ENCODE measurements at regions of chr19 and their contacts with region 1.

Region 1: GRCh38 chr19:36837906-36838783 is at the start of gene ZNF790:
- DNase-seq: peak; percentile 83 to 86 (median 84)
- H3K4me3 ChIP-seq: peak within 1 kb of the TSS; percentile 61 to 92 (median 64)
- H3K4me3 Mint-ChIP-seq: no peak within 1 kb of the TSS
- H3K27ac ChIP-seq: peak within 1 kb of the TSS; percentile 83 to 86
- H3K27ac Mint-ChIP-seq: no peak within 1 kb of the TSS
- H3K4me1 ChIP-seq: peaks cover 14 to 18% of the 10 kb centered on the region in 2 donors
- H3K4me1 Mint-ChIP-seq: no peaks in the 10 kb centered on the region
- H3K27me3 ChIP-seq: no peaks in the 10 kb centered on the region
- H3K27me3 Mint-ChIP-seq: no peaks in the 10 kb centered on the region
- CTCF ChIP-seq: no peak
- polyA plus RNA-seq, gene ZNF790: 0.35 to 2.7 (median 2.3) TPM

Region 2: DNA sequence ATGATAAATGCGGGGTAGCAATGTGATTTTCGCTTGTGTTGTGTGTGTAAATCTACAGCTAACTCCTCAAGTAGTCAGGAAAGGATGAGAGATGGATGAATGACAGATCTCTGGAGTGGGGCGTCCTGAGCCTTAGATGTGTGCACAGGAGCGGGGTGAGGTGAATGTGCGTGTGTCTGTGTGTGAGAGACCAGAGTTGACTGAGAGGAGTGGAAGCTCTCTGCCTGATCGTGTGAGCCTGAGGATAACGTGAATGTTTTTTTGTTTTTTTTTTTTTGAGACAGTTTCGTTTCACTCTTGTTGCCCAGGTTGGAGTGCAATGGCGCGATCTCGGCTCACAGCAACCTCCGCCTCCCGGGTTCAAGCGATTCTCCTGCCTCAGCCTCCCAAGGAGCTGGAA is 172.3 kb before region 1 on chr19:
- intact Hi-C with region 1: loop called in 1 of 2 experiments (anchors 5 kb)
- DNase-seq: no peak
- H3K4me3 ChIP-seq: peak overlapping the region; percentile 58 to 85 (median 79)
- H3K4me3 Mint-ChIP-seq: peak overlapping the region; percentile 97 to 100
- H3K27ac ChIP-seq: no peak overlapping the region
- H3K27ac Mint-ChIP-seq: peak overlapping the region in 1 of 7 donors; percentile 16
- H3K4me1 ChIP-seq: peaks cover 8 to 14% of the 10 kb centered on the region in 2 donors
- H3K4me1 Mint-ChIP-seq: peaks cover 13% of the 10 kb centered on the region
- H3K27me3 ChIP-seq: no peaks in the 10 kb centered on the region
- H3K27me3 Mint-ChIP-seq: peaks cover 2 to 5% (median 3%) of the 10 kb centered on the region in 3 donors
- CTCF ChIP-seq: no peak

Region 3: DNA sequence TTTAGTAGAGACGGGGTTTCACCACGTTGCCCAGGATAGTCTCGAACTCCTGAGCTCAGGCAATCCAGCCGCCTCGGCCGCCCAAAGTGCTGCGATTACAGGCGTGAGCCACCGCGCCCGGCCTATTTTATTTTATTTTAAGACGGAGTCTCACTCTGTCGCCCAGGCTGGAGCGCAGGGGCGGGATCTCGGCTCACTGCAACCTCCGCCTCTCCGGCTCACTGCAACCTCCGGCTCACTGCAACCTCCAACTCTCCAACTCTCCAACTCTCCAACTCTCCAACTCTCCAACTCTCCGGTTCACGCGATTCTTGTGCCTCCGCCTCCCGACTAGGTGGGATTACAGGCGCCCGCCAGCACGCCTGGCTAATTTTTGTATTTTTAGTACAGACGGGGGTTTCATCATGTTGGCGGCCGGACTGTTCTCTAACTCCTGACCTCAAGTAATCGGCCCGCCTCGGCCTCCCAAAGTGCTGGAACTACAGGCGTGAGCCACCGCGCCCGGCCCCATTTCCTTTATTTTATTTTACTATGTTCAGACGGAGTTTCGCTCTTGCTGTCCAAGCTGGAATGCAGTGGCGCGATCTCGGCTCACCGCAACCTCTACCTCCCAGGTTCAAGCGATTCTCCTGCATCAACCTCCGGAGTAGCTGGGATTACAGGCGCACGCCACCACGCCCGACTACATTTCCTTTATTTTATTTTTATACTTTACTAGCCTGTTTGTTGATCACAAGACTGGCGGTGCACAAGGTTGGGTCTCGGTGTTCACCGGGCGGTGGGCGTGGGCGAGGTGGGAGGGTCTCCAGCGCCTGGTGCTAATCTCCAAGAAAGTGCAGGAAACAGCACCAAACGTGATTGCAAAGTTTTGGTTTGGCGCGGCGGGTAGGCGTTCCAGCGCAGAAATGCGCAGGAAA is 41.8 kb before region 1 on chr19:
- intact Hi-C with region 1: loop called (anchors 5 kb)
- DNase-seq: no peak
- H3K4me3 ChIP-seq: peak overlapping the region; percentile 60 to 97 (median 61)
- H3K4me3 Mint-ChIP-seq: peak overlapping the region; percentile 90 to 94
- H3K27ac ChIP-seq: peak overlapping the region; percentile 59 to 73
- H3K27ac Mint-ChIP-seq: peak overlapping the region in 3 of 7 donors; percentile 88 to 96 (median 92)
- H3K4me1 ChIP-seq: peaks cover 9 to 16% of the 10 kb centered on the region in 2 donors
- H3K4me1 Mint-ChIP-seq: peaks cover 8% of the 10 kb centered on the region
- H3K27me3 ChIP-seq: no peaks in the 10 kb centered on the region
- H3K27me3 Mint-ChIP-seq: peaks cover 2 to 5% (median 4%) of the 10 kb centered on the region in 3 donors
- CTCF ChIP-seq: no peak

Region 4: GRCh38 chr19:37077934-37078725 is 240.0 kb after region 1 on chr19 and contains the start of gene ZNF420:
- intact Hi-C with region 1: loop called in 1 of 2 experiments (anchors 5 kb)
- DNase-seq: peak; percentile 82 to 90 (median 85)
- H3K4me3 ChIP-seq: peak within 1 kb of the TSS; percentile 57 to 94 (median 89)
- H3K4me3 Mint-ChIP-seq: peak within 1 kb of the TSS; percentile 99 to 100
- H3K27ac ChIP-seq: peak within 1 kb of the TSS; percentile 40 to 75
- H3K27ac Mint-ChIP-seq: peak within 1 kb of the TSS; percentile 62 to 96 (median 85)
- H3K4me1 ChIP-seq: peaks cover 16 to 19% of the 10 kb centered on the region in 2 donors
- H3K4me1 Mint-ChIP-seq: peaks cover 20% of the 10 kb centered on the region
- H3K27me3 ChIP-seq: no peaks in the 10 kb centered on the region
- H3K27me3 Mint-ChIP-seq: peaks cover 0 to 5% (median 0%) of the 10 kb centered on the region in 3 donors
- CTCF ChIP-seq: no peak
- polyA plus RNA-seq, gene ZNF420: 1.4 to 2.5 (median 1.8) TPM

Measured in CD14-positive monocyte (primary cell).